Heart right ventricle (tissue), 16 donors: ENCODE measurements at regions of chr21 and their contacts with region 1.

Region 1: GRCh38 chr21:41663801-41664788 is 102.8 kb downstream of the RIPK4 start:
- DNase-seq: no peak
- ATAC-seq: no peak
- H3K4me3 ChIP-seq: no peak overlapping the region
- H3K27ac ChIP-seq: peak overlapping the region in 1 of 10 donors; percentile 26
- H3K4me1 ChIP-seq: peaks cover 0 to 18% (median 0%) of the 10 kb centered on the region in 9 donors
- H3K27me3 ChIP-seq: peaks cover 0 to 22% (median 13%) of the 10 kb centered on the region in 7 donors
- CTCF ChIP-seq: no peak

Region 2: DNA sequence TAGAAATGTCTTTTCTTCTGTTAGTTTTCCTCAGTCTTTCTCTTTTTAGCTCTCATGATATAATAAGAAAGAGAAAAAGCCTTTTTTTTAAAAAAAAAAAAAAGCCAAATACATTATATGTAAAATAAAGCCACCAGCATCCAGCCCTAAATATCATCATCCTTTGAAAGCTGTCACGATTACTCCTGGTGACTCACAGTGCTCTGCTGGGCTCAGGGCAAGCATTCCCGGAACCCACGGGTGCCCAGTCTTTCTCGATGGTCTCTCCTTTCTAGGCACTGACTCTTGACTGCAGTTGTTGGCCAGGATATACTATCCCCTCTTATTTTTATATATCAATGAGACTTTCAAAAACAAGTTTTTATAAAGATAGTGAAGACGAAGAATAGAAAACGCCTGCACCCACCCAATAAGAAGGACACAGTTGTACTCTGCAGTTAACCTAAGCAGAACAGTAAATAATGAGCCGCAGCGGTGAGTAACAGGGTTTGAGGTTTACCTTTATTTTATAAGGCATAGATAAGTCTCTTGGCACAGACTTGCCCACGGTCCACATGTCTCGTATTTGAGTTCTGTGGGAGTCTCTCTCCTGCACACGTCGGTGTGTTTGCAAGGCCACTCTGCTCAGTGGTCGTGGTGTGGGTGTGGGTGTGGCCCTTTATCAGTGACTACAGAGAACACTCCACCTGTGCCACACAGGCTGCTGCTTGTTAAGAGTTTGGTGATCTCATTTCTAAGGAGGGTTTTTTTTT is 318.0 kb before region 1 on chr21:
- intact Hi-C with region 1: loop called in 1 of 10 experiments (anchors 10 kb)
- DNase-seq: no peak
- ATAC-seq: no peak
- H3K4me3 ChIP-seq: no peak overlapping the region
- H3K27ac ChIP-seq: no peak overlapping the region
- H3K4me1 ChIP-seq: peaks cover 0 to 5% (median 0%) of the 10 kb centered on the region in 9 donors
- H3K27me3 ChIP-seq: peaks cover 0 to 38% (median 6%) of the 10 kb centered on the region in 7 donors
- CTCF ChIP-seq: no peak

Region 3: GRCh38 chr21:41726945-41727783 is 63.1 kb after region 1 on chr21:
- intact Hi-C with region 1: loop called in 1 of 10 experiments (anchors 10 kb)
- DNase-seq: peak; percentile 55 to 77
- ATAC-seq: peak; percentile 65 to 87 (median 84)
- H3K4me3 ChIP-seq: no peak overlapping the region
- H3K27ac ChIP-seq: no peak overlapping the region
- H3K4me1 ChIP-seq: peaks cover 0 to 24% (median 7%) of the 10 kb centered on the region in 9 donors
- H3K27me3 ChIP-seq: peaks cover 3 to 69% (median 64%) of the 10 kb centered on the region in 7 donors
- CTCF ChIP-seq: no peak